ENCODE measurements at regions of chrX and their contacts with region 1.

Region 1: DNA sequence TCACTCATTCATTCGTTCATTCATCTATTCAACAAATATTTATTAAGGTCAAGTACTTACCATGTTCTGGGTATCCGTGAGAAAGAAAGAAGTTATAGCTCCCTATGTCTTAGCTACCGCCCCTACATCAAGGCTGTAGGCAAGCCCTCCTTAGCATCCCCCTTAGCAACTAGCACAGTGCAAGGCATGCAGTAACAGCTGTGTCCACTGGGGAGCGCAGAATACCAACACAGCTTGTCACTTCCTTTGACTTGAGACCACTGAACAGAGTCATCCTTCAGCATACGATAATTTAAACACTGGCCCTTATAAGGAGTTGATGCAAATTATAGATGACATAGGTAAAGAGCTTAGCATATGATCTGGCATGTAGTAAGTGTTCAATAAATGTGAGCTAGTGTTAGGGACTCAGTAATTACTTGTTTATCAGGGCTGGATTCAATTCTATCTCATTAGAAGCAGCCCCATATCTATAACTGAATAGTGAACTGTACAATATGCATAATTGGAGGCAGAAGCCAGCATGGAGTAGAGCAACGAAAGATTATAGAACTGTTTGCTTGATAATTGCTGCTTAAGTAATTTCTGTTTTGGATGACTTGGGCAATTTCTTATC is 8.7 kb downstream of the KIAA1210 start:
- DNase-seq: peak; percentile 42 to 62 (median 58)
- ATAC-seq: peak; percentile 93
- H3K4me3 ChIP-seq: no peak overlapping the region
- H3K27ac ChIP-seq: no peak overlapping the region
- H3K4me1 ChIP-seq: no peaks in the 10 kb centered on the region
- H3K27me3 ChIP-seq: peaks cover 0 to 14% of the 10 kb centered on the region in 2 experiments; a peak in 3 of 5 replicates
- CTCF ChIP-seq: peak; percentile 72 to 73 (median 73)
- EP300 ChIP-seq: no peak
- POLR2A ChIP-seq: no peak
- RAD21 ChIP-seq: peak; percentile 56 to 80

Region 2: DNA sequence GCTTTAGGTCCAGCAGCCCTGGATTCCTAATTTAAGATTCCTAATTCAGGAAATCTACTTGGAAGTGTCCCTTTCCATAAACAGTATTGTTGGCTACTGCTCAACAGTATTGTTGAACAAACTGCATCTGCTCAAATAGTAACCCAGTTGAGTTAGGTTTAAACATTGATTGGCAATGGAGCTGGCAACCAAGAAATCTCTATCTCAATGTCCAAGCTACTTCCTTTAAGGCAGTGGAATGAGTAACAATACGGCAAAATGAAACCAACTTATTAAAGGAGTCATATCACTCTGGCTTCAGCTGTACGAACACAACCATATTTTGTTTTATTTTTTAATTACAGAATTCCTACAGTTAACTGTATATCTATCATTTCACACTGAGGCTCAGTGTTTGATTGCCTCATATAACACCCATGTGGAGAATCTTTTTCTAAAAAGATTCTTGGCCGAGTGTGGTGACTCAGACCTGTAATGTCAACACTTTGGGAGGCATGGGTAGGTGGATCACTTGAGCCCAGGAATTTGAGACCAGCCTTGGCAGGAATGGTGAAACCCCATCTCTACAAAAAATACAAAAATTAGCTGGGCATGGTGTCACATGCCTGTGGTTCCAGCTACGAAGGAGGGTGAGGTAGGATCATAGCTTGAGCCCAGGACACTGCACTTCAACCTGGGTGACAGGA is 463.2 kb before region 1 on chrX:
- CTCF ChIA-PET with region 1: no interaction called
- POLR2A ChIA-PET with region 1: no interaction called
- in situ Hi-C with region 1: no loop called
- intact Hi-C with region 1: no loop called
- DNase-seq: no peak
- ATAC-seq: no peak
- H3K4me3 ChIP-seq: no peak overlapping the region
- H3K27ac ChIP-seq: no peak overlapping the region
- H3K4me1 ChIP-seq: no peaks in the 10 kb centered on the region
- H3K27me3 ChIP-seq: no peaks in the 10 kb centered on the region
- CTCF ChIP-seq: no peak
- EP300 ChIP-seq: no peak
- POLR2A ChIP-seq: no peak
- RAD21 ChIP-seq: no peak

Region 3: GRCh38 chrX:118928151-118928550 is 190.7 kb before region 1 on chrX:
- CTCF ChIA-PET with region 1: no interaction called
- POLR2A ChIA-PET with region 1: no interaction called
- in situ Hi-C with region 1: no loop called
- intact Hi-C with region 1: no loop called
- DNase-seq: no peak
- ATAC-seq: no peak
- H3K4me3 ChIP-seq: no peak overlapping the region
- H3K27ac ChIP-seq: no peak overlapping the region
- H3K4me1 ChIP-seq: no peaks in the 10 kb centered on the region
- H3K27me3 ChIP-seq: no peaks in the 10 kb centered on the region; a peak in 1 of 5 replicates
- CTCF ChIP-seq: no peak
- EP300 ChIP-seq: no peak
- POLR2A ChIP-seq: no peak
- RAD21 ChIP-seq: no peak

Region 4: DNA sequence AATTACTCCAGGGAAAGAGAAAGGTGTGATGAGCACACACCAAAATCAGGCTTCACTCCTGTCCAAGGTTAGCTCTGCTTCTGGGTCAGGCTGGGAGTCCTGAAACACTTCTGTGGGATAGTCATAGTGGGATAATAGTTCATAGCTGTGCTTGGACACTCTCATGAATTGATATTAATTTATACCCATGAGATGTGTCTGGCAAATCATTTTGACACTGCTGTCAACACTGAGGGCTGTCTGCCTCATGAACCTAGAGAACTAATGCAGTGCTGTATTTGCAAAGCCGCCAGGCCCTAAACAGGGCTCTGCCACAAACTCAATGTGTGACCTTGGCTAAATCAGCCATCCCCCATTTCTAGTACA is 92.7 kb after region 1 on chrX:
- CTCF ChIA-PET with region 1: interaction called, 3 read pairs
- POLR2A ChIA-PET with region 1: no interaction called
- in situ Hi-C with region 1: loop called (anchors 10 kb)
- intact Hi-C with region 1: no loop called
- DNase-seq: no peak
- ATAC-seq: no peak
- H3K4me3 ChIP-seq: no peak overlapping the region
- H3K27ac ChIP-seq: no peak overlapping the region
- H3K4me1 ChIP-seq: 0 out of 5 replicates have a peak, but pooled peaks cover 0 to under 1% of the 10 kb centered on the region in 2 experiments
- H3K27me3 ChIP-seq: peaks cover 2 to 7% of the 10 kb centered on the region in 2 experiments; a peak in 2 of 5 replicates
- CTCF ChIP-seq: no peak
- EP300 ChIP-seq: no peak
- POLR2A ChIP-seq: no peak
- RAD21 ChIP-seq: no peak

Region 5: GRCh38 chrX:119222932-119223331 is 104.0 kb after region 1 on chrX:
- CTCF ChIA-PET with region 1: interaction called, 4 read pairs
- POLR2A ChIA-PET with region 1: no interaction called
- in situ Hi-C with region 1: loop called (anchors 10 kb)
- intact Hi-C with region 1: loop called (anchors 1 kb)
- DNase-seq: no peak
- ATAC-seq: no peak
- H3K4me3 ChIP-seq: no peak overlapping the region
- H3K27ac ChIP-seq: no peak overlapping the region
- H3K4me1 ChIP-seq: no peaks in the 10 kb centered on the region
- H3K27me3 ChIP-seq: no peaks in the 10 kb centered on the region; a peak in 2 of 5 replicates
- CTCF ChIP-seq: no peak
- EP300 ChIP-seq: no peak
- POLR2A ChIP-seq: no peak
- RAD21 ChIP-seq: no peak